Activated CD4-positive, alpha-beta memory T cell treated with anti-CD3 and anti-CD28 coated beads for 36 hours (primary cell): ENCODE measurements at regions of chr11 and their contacts with region 1.

Region 1: GRCh38 chr11:10405855-10406592 is 49.0 kb upstream of the AMPD3 start:
- DNase-seq: peak; percentile 60
- H3K4me3 Mint-ChIP-seq: no peak overlapping the region
- H3K27ac Mint-ChIP-seq: no peak overlapping the region
- H3K4me1 Mint-ChIP-seq: peaks cover 15% of the 10 kb centered on the region
- H3K27me3 Mint-ChIP-seq: no peaks in the 10 kb centered on the region

Region 2: GRCh38 chr11:10725114-10725906 is 319.3 kb after region 1 on chr11:
- CTCF ChIA-PET with region 1: interaction called, 12 read pairs
- POLR2A ChIA-PET with region 1: no interaction called
- intact Hi-C with region 1: no loop called
- DNase-seq: peak; percentile 52
- H3K4me3 Mint-ChIP-seq: peak overlapping the region; percentile 9
- H3K27ac Mint-ChIP-seq: peak overlapping the region; percentile 69
- H3K4me1 Mint-ChIP-seq: peaks cover 16% of the 10 kb centered on the region
- H3K27me3 Mint-ChIP-seq: peaks cover 7% of the 10 kb centered on the region